GM18951 (cell line): ENCODE measurements at regions of chr2 and their contacts with region 1.

Region 1: DNA sequence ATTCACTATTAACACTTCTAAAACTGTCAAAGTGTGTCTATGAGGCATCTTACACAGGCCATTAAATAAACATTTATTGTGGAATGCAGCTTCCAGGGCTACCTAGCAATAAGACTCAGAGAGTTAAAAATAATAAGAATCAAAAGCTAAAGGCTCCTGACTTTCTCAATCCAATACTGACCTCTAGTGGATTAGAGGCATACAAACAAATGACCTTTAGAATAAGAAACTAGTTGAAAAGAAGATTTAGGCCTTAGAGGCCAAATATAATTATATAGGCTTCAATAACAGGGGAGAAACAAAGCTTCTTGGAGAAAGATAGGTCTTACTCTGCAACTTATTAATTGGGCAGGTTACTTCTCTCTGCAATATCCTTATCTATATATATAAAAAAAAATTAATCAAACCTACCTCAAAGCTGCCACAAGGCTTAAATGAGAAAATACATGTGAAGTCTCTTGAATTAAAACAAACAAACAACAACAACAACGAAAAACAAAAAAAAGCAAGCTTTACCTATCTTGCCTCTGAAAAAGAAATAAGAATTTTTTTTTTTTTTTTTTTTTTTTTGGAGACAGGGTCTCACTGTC is 246.1 kb downstream of the EXOC6B start:
- POLR2A ChIP-seq: no peak

Region 2: GRCh38 chr2:71933467-71934319 is 646.0 kb before region 1 on chr2:
- in situ Hi-C with region 1: loop called (anchors 25 kb)
- POLR2A ChIP-seq: no peak

Region 3: DNA sequence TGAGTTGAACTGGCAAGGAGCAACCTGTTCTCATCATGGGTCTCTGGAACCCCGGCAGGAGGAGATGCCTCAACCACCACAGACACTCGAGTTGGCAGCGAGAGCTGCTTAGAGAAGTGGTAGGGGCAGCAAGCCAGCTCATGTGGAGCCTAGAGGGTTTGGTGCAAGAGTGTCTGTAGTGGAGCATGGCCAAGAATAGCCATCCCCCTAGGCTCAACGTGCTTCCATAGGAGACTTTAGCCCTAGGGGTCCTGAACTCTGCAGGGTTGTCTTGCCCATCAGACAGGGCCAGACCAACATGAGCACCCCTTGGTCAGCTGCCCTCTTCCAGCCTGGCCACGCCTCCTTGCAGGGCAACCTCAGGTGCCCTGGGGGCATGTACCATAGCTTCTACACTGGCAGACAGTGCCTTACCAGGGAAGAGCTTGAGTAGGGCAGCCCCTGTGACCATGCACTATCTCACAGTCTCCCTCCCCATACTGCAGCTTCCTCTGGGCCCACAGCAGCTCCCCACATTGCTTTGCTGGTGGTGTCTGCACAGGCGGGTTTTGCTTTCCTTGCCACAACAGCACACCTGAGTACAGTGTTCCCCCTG is 59.0 kb after region 1 on chr2:
- in situ Hi-C with region 1: no loop called
- POLR2A ChIP-seq: no peak

Region 4: GRCh38 chr2:72862239-72862988 is 282.7 kb after region 1 on chr2:
- in situ Hi-C with region 1: no loop called
- POLR2A ChIP-seq: no peak